ENCODE measurements at regions of chr5 and their contacts with region 1.

Region 1: DNA sequence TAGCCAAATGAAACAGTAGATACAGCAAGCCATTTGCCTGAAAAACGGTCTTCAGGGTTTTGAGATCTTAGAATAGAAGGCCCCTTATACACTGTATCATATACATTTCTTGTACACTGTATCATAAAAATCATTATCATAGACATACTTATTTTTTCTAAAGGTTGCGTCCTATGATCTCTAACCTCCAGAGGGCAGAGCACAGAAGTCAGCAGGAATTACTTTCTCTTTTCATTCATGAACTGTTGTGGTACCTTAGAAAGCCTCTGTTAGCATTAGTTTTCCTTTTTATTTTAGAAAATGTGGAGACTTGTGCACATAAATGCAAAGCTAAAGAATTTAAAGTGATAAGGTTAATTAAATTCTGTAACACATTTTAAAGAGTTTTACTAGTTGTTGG is 115.4 kb downstream of the OXCT1 start:
- DNase-seq: no peak
- ATAC-seq: no peak

Region 2: GRCh38 chr5:41629897-41630296 is 125.0 kb before region 1 on chr5:
- intact Hi-C with region 1: no loop called
- DNase-seq: no peak
- ATAC-seq: no peak

Region 3: DNA sequence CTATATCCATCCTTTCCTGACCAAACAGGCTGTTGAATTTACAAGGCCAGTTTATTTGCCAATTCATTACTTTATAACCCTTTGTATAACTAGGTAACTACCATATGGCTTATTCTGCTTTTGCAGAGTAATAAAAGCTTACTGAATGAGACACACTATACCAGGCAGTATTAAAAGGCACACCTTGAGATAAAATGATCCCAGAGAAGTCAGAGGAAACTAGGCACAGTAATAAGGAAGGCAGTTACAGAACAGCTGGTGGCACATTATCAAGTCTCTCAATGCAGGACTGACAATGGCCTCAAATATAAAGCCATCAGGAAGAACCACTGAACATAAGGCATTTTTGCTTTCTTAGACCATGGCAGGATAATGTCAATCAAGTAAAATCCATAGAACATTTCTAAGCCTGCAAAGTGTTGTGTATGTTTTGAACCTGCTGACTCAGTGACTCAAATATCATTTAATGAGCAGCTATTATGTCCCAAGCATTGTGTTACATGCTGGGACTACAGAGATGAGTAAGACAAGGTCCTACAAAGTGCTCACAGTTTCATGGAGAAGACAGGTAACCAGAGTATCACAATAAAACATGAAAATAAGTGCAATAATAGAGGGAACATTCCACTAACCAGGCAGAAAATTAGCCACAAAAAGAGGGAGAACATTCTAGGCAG is 62.9 kb after region 1 on chr5:
- intact Hi-C with region 1: no loop called
- DNase-seq: no peak
- ATAC-seq: no peak

Region 4: GRCh38 chr5:41843456-41844370 is 88.9 kb after region 1 on chr5:
- intact Hi-C with region 1: loop called (anchors 5 kb)
- DNase-seq: no peak
- ATAC-seq: peak; percentile 72

Measured in left ventricle myocardium superior (tissue), 1 donor.